OCI-LY7 (cell line): ENCODE measurements at regions of chr18 and their contacts with region 1.

Region 1: DNA sequence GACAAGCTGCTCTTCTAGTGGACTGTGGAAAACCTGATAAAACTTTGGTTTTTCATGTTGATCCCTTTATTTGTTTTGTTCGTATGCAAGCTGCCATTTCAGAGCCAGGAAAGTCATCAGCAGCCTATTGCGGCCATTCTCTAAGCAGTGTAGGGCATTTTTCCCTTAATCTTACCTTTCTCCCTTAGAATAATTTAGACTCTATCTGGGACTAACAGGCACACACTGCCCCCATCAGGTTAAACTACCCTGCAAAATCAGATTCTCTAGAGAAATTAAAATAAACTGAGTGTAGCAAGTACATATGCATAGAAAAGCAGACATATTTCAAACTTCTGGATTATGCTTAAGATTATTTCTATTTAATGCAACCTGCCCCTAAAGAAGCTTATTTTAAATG is 347.5 kb downstream of the METTL4 start:
- DNase-seq: peak; percentile 24
- H3K4me3 ChIP-seq: no peak overlapping the region
- H3K27ac ChIP-seq: no peak overlapping the region
- H3K4me1 ChIP-seq: no peaks in the 10 kb centered on the region
- CTCF ChIP-seq: peak; percentile 80

Region 2: DNA sequence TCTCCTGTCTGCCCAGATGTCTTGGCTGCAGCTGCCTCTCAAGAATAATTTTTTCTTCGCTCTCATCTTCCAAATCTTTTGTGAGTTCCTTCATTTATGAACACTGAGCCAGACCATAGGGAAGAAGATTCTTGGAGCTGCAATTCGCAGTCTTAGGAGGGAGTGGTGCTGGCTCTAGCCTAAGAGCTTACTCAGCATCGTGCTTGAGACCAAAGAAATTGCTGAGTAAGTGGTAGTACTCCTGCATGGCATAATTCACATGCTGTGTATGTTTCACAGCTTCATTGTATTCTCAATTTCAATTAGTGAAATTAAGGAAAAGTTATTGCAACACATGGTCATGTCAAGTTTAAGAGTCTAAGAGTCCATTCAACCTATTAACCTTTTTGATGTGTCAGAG is 547.5 kb before region 1 on chr18:
- CTCF ChIA-PET with region 1: no interaction called
- POLR2A ChIA-PET with region 1: no interaction called
- intact Hi-C with region 1: no loop called
- DNase-seq: no peak
- H3K4me3 ChIP-seq: no peak overlapping the region
- H3K27ac ChIP-seq: no peak overlapping the region
- H3K4me1 ChIP-seq: no peaks in the 10 kb centered on the region
- CTCF ChIP-seq: no peak

Region 3: GRCh38 chr18:2104620-2105462 is 119.0 kb before region 1 on chr18:
- CTCF ChIA-PET with region 1: no interaction called
- POLR2A ChIA-PET with region 1: interaction called, 3 read pairs
- intact Hi-C with region 1: loop called (anchors 5 kb)
- DNase-seq: peak; percentile 69
- H3K4me3 ChIP-seq: no peak overlapping the region
- H3K27ac ChIP-seq: no peak overlapping the region
- H3K4me1 ChIP-seq: no peaks in the 10 kb centered on the region
- CTCF ChIP-seq: peak; percentile 89

Region 4: DNA sequence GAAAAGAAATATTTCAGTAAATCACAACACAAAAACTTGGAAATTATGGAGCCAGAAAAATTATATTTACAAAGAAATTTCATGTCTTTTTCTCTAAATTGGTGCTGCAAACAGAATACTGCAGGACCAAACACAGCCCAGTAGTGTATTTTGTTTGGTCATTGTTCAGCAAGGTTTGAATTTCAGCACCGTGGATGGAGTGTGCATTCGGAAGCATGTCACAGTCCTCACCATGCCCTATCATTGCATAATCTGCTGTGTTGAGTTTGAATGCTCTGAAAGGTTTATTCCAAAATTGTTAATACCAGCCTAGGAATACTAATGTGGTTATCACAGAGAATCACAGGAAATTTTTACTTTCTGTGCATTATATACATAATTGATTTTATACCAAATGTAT is 50.8 kb after region 1 on chr18:
- CTCF ChIA-PET with region 1: no interaction called
- POLR2A ChIA-PET with region 1: no interaction called
- intact Hi-C with region 1: loop called (anchors 5 kb)
- DNase-seq: no peak
- H3K4me3 ChIP-seq: no peak overlapping the region
- H3K27ac ChIP-seq: no peak overlapping the region
- H3K4me1 ChIP-seq: no peaks in the 10 kb centered on the region
- CTCF ChIP-seq: no peak